GM12878 (cell line): ENCODE measurements at regions of chr21 and their contacts with region 1.

Region 1: DNA sequence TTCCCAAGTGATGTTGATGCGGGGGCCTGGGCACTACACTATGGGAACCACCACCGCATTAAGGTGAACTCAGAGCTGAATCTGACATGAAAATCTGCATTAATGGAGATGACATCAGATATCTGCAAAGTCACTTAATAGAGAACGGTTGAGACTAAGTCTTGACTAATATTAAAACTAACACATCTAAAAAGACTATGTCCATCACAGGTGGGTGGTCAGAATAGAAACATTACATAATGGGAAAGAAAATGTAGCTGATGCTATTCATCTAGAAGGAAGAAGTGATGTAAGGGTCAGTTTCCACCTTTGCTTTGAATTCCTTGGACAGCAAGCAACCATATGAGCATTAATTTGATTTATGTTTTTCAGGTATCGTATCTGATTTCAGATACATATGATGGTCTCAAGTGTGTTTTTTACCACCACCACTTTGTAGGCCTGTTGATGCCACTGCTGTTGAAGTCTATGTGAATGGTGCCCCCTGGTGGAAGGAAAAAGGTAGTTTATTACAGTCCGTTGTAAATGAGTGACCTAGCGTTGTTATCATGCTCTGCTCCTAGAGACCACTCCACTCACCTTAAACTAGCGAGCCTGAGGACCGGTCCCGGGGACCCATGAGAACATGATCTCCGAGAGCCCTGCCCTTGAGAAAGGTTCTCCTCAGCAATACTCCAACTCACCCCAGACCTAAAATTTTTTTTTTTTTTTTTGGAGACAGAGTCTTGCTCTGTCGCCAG is 73.5 kb downstream of the BACH1 start:
- DNase-seq: peak; percentile 59
- ATAC-seq: peak; percentile 95
- H3K4me3 ChIP-seq: no peak overlapping the region
- H3K27ac ChIP-seq: no peak overlapping the region
- H3K4me1 ChIP-seq: no peaks in the 10 kb centered on the region
- H3K27me3 ChIP-seq: no peaks in the 10 kb centered on the region
- CTCF ChIP-seq: peak; percentile 57 to 86 (median 65); a peak in 4 of 6 replicates
- EP300 ChIP-seq: no peak
- POLR2A ChIP-seq: no peak
- RAD21 ChIP-seq: peak; percentile 93

Region 2: DNA sequence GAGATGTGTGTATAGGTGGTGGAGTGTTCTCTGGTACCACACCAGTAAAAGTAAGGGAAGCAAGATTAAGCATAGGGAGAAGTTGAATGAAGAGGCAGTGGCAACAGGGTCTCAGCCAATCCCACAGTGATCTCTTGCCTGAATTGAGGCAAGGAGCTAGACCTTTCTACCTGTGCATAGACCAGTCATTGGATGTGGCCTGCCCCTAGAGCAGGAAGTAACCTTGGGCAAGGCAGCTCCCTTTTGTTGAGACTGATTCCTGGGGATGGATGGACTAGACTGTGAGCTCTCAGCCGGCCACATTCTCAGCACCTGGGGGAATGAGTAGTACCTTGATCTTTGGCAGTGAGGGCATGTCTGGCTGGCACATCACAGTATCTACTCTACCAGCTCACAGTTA is 341.3 kb before region 1 on chr21:
- CTCF ChIA-PET with region 1: no interaction called
- POLR2A ChIA-PET with region 1: no interaction called
- RAD21 ChIA-PET with region 1: no interaction called
- SMC1A ChIA-PET with region 1: no interaction called
- in situ Hi-C with region 1: no loop called
- intact Hi-C with region 1: no loop called
- DNase-seq: no peak
- ATAC-seq: no peak
- H3K4me3 ChIP-seq: no peak overlapping the region
- H3K27ac ChIP-seq: no peak overlapping the region
- H3K4me1 ChIP-seq: no peaks in the 10 kb centered on the region
- H3K27me3 ChIP-seq: no peaks in the 10 kb centered on the region
- CTCF ChIP-seq: no peak
- EP300 ChIP-seq: no peak
- POLR2A ChIP-seq: no peak
- RAD21 ChIP-seq: no peak

Region 3: DNA sequence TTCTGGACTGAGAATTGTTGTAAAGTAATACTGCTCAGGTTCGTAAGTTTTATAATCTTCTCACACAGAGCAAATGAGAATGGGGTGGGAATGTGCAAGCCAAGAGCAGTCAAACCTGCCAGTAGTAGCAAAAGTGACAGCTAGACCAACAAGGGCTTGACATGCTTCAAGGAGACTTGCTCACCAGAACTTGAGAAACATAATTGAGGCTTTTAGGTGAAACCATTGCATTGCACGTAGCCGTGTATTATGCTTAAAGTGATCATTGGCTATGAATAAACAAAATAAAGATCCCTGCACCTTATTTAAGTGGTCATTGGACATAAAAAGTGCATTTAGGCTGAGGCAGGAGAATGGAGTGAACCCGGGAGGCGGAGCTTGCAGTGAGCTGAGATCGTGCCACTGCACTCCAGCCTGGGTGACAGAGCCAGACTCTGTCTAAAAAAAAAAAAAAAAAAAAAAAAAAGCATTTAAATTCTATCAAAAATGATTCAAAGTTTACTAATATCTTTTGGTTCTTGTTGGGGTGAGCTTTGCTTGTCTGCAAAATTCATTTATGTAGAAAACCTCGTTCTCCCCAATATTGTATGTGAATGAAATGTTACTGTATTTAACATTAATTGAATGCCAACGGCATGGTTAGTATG is 287.0 kb before region 1 on chr21:
- CTCF ChIA-PET with region 1: interaction called, 235 read pairs
- POLR2A ChIA-PET with region 1: interaction called, 5 read pairs
- RAD21 ChIA-PET with region 1: interaction called, 85 read pairs
- SMC1A ChIA-PET with region 1: interaction called, 114 read pairs
- in situ Hi-C with region 1: loop called (anchors 5 kb)
- intact Hi-C with region 1: loop called (anchors 1 kb)
- DNase-seq: no peak
- ATAC-seq: no peak
- H3K4me3 ChIP-seq: no peak overlapping the region
- H3K27ac ChIP-seq: no peak overlapping the region
- H3K4me1 ChIP-seq: 0 out of 2 replicates have a peak, but pooled peaks cover under 1% of the 10 kb centered on the region
- H3K27me3 ChIP-seq: no peaks in the 10 kb centered on the region
- CTCF ChIP-seq: no peak
- EP300 ChIP-seq: no peak
- POLR2A ChIP-seq: no peak
- RAD21 ChIP-seq: no peak

Region 4: GRCh38 chr21:29098156-29098555 is 274.1 kb before region 1 on chr21:
- CTCF ChIA-PET with region 1: interaction called, 235 read pairs
- POLR2A ChIA-PET with region 1: interaction called, 3 read pairs
- RAD21 ChIA-PET with region 1: interaction called, 85 read pairs
- SMC1A ChIA-PET with region 1: interaction called, 114 read pairs
- in situ Hi-C with region 1: no loop called
- intact Hi-C with region 1: no loop called
- DNase-seq: no peak
- ATAC-seq: no peak
- H3K4me3 ChIP-seq: no peak overlapping the region
- H3K27ac ChIP-seq: no peak overlapping the region
- H3K4me1 ChIP-seq: no peaks in the 10 kb centered on the region
- H3K27me3 ChIP-seq: no peaks in the 10 kb centered on the region
- CTCF ChIP-seq: no peak
- EP300 ChIP-seq: no peak
- POLR2A ChIP-seq: no peak
- RAD21 ChIP-seq: no peak

Region 5: GRCh38 chr21:29164325-29164942 is 207.8 kb before region 1 on chr21:
- CTCF ChIA-PET with region 1: interaction called, 29 read pairs
- POLR2A ChIA-PET with region 1: no interaction called
- RAD21 ChIA-PET with region 1: interaction called, 17 read pairs
- SMC1A ChIA-PET with region 1: interaction called, 27 read pairs
- in situ Hi-C with region 1: loop called (anchors 5 kb)
- intact Hi-C with region 1: loop called (anchors 1 kb)
- DNase-seq: no peak
- ATAC-seq: peak; percentile 78
- H3K4me3 ChIP-seq: no peak overlapping the region
- H3K27ac ChIP-seq: no peak overlapping the region
- H3K4me1 ChIP-seq: no peaks in the 10 kb centered on the region
- H3K27me3 ChIP-seq: no peaks in the 10 kb centered on the region
- CTCF ChIP-seq: peak; percentile 36 to 55 (median 50); a peak in 5 of 6 replicates
- EP300 ChIP-seq: no peak
- POLR2A ChIP-seq: no peak
- RAD21 ChIP-seq: peak; percentile 97

Region 6: GRCh38 chr21:29232601-29233546 is 139.4 kb before region 1 on chr21:
- CTCF ChIA-PET with region 1: interaction called, 16 read pairs
- POLR2A ChIA-PET with region 1: interaction called, 5 read pairs
- RAD21 ChIA-PET with region 1: interaction called, 29 read pairs
- SMC1A ChIA-PET with region 1: interaction called, 26 read pairs
- in situ Hi-C with region 1: no loop called
- intact Hi-C with region 1: loop called (anchors 1 kb)
- DNase-seq: no peak
- ATAC-seq: peak; percentile 42
- H3K4me3 ChIP-seq: 0 out of 2 replicates have a peak overlapping the region, but pooled peaks have one; percentile 2
- H3K27ac ChIP-seq: peak overlapping the region; percentile 87
- H3K4me1 ChIP-seq: peaks cover 69% of the 10 kb centered on the region
- H3K27me3 ChIP-seq: no peaks in the 10 kb centered on the region
- CTCF ChIP-seq: peak; percentile 16 to 43 (median 30); a peak in 3 of 6 replicates
- EP300 ChIP-seq: no peak
- POLR2A ChIP-seq: no peak
- RAD21 ChIP-seq: peak; percentile 68

Region 7: DNA sequence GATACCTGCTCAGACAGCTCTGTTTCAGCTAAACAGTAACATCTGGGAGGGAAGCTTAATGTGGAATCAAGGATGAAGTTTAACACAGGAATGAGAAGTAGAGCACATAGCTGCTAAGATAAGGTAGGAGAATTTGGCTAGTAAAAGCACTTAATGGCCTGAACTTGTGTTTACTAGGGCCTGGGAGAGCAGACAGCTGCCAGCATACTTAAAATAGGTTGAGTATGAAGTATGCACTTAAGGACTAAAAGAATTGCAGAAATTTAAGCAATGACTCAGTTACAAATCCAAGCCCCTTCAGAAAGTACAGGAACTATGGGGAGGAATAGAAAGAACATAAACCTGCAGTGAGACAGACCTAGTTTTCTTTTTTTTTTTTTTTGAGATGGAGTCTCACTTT is 20.5 kb before region 1 on chr21:
- CTCF ChIA-PET with region 1: interaction called, 13 read pairs
- POLR2A ChIA-PET with region 1: no interaction called
- RAD21 ChIA-PET with region 1: interaction called, 10 read pairs
- SMC1A ChIA-PET with region 1: interaction called, 6 read pairs
- in situ Hi-C with region 1: no loop called
- intact Hi-C with region 1: no loop called
- DNase-seq: no peak
- ATAC-seq: no peak
- H3K4me3 ChIP-seq: no peak overlapping the region
- H3K27ac ChIP-seq: no peak overlapping the region
- H3K4me1 ChIP-seq: peaks cover 16% of the 10 kb centered on the region
- H3K27me3 ChIP-seq: no peaks in the 10 kb centered on the region
- CTCF ChIP-seq: no peak
- EP300 ChIP-seq: no peak
- POLR2A ChIP-seq: no peak
- RAD21 ChIP-seq: no peak